ENCODE measurements at regions of chr3 and their contacts with region 1.

Region 1: DNA sequence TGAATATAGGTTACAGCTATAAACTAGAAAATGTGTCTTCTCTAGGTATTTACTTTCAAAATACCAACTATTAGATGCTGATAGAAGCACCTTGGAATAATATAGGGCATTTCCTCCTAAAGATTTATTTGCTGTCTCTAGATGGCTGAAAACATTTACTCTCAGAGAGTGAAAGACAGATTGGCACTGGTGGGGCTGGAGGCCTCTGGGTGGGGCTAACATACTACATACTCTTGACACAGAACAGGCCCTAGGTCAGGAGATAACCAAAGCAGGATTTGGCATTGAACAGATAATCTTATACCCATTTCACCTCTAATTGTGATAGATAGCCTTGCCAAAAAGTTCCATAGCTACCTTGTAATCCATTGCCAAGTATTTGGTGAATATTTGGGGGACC is 253.3 kb upstream of the TBC1D5 start:
- DNase-seq: no peak
- H3K4me3 ChIP-seq: no peak overlapping the region
- H3K27ac ChIP-seq: no peak overlapping the region
- H3K4me1 ChIP-seq: no peaks in the 10 kb centered on the region
- H3K27me3 ChIP-seq: no peaks in the 10 kb centered on the region
- CTCF ChIP-seq: no peak

Region 2: GRCh38 chr3:16028604-16029003 is 1967.2 kb before region 1 on chr3:
- CTCF ChIA-PET with region 1: no interaction called
- POLR2A ChIA-PET with region 1: no interaction called
- intact Hi-C with region 1: loop called (anchors 10 kb)
- DNase-seq: no peak
- H3K4me3 ChIP-seq: no peak overlapping the region
- H3K27ac ChIP-seq: no peak overlapping the region
- H3K4me1 ChIP-seq: no peaks in the 10 kb centered on the region
- H3K27me3 ChIP-seq: peaks cover 14% of the 10 kb centered on the region
- CTCF ChIP-seq: no peak

Region 3: GRCh38 chr3:17707813-17708543 is 287.8 kb before region 1 on chr3:
- CTCF ChIA-PET with region 1: no interaction called
- POLR2A ChIA-PET with region 1: no interaction called
- intact Hi-C with region 1: no loop called
- DNase-seq: no peak
- H3K4me3 ChIP-seq: no peak overlapping the region
- H3K27ac ChIP-seq: no peak overlapping the region
- H3K4me1 ChIP-seq: no peaks in the 10 kb centered on the region
- H3K27me3 ChIP-seq: no peaks in the 10 kb centered on the region
- CTCF ChIP-seq: no peak

Region 4: DNA sequence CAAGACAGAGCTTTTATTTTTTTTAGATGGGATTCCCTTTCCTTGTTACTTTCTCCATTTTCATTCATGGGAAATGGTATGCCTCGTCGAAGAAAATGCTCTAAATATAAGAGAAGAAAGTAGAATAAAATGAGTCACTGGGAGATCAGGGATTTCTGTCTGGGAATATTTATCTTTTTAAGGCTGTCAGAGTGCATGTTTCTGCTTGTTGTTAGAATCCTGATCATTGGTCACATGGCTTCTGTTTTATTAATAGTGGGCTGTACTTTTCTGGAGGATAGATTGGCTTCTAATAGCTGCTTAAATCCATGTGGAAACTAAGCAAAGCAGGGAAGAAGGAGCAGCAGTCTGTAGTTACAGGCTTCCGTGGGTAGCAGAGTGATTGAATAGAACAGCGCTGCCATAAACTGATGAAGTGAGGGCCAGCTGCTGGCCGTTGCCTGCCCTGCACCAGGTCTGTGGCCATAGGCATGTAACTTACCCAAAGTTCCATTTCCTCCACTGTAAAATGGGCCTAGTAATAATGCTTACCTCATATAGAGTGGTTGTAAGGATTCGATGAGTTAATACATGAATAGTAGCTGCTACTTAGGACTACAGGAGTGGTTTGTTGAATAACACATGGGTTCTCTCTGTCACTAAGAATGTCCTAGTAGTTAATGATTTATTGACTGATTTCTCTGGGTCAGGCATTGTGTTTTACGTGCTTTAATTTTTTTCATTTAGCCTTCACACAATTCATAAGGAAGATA is 139.5 kb after region 1 on chr3:
- CTCF ChIA-PET with region 1: no interaction called
- POLR2A ChIA-PET with region 1: no interaction called
- intact Hi-C with region 1: no loop called
- DNase-seq: no peak
- H3K4me3 ChIP-seq: no peak overlapping the region
- H3K27ac ChIP-seq: no peak overlapping the region
- H3K4me1 ChIP-seq: no peaks in the 10 kb centered on the region
- H3K27me3 ChIP-seq: no peaks in the 10 kb centered on the region
- CTCF ChIP-seq: no peak